Left colon (tissue), 2 donors: ENCODE measurements at regions of chr1 and their contacts with region 1.

Region 1: DNA sequence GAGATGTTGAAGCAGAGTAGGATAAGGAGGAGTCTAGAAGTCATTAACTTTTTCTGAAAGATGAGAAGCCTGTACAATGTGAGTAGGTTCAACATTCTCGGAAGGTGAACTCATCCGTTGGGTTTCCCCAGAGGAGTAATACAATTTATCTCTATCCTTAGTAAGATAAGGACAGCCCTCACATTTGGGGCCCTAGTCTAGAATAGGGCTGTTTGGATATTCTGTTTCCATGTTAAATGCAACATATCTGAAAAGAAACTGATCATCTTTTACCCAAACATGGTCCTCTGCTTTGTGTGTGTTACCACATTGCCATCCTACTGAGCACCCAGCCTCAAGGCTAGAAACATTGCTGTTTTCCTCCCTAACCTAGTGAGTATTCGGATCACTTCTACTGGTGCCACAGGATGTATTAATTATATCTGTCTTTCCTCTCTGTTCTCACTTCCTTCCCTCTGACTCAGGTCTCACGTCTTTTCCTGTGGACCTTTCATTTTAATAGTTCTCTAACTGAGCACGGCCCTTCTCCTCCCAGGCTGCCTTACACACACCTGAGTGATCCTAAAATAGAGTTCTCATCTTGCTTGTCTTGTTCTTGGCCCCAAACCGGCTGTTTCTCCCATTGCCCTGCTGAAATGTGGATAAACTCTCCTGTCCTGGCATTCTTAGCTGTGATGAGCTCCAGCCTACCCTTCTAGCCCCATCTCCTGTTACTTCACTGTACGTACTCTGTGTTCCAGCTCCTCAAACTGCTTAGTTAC is 91.7 kb downstream of the CDC14A start:
- DNase-seq: no peak
- ATAC-seq: no peak

Region 2: GRCh38 chr1:99801584-99801983 is 642.4 kb before region 1 on chr1:
- intact Hi-C with region 1: no loop called
- DNase-seq: no peak
- ATAC-seq: peak; percentile 91

Region 3: GRCh38 chr1:100253552-100253951 is 190.4 kb before region 1 on chr1:
- intact Hi-C with region 1: no loop called
- DNase-seq: no peak
- ATAC-seq: no peak

Region 4: GRCh38 chr1:100292711-100293110 is 151.3 kb before region 1 on chr1:
- intact Hi-C with region 1: loop called in 1 of 2 experiments (anchors 10 kb)
- DNase-seq: no peak
- ATAC-seq: no peak

Region 5: GRCh38 chr1:101216623-101217022 is 772.6 kb after region 1 on chr1:
- intact Hi-C with region 1: no loop called
- DNase-seq: no peak
- ATAC-seq: no peak